ENCODE measurements at regions of chr10 and their contacts with region 1.

Region 1: GRCh38 chr10:117216611-117217195 is 19.4 kb downstream of the KCNK18 start:
- DNase-seq: peak; percentile 67
- ATAC-seq: peak; percentile 86
- H3K4me3 Mint-ChIP-seq: peak overlapping the region; percentile 66
- H3K27ac Mint-ChIP-seq: no peak overlapping the region
- H3K4me1 Mint-ChIP-seq: peaks cover 7% of the 10 kb centered on the region
- H3K27me3 Mint-ChIP-seq: peaks cover 34% of the 10 kb centered on the region

Region 2: DNA sequence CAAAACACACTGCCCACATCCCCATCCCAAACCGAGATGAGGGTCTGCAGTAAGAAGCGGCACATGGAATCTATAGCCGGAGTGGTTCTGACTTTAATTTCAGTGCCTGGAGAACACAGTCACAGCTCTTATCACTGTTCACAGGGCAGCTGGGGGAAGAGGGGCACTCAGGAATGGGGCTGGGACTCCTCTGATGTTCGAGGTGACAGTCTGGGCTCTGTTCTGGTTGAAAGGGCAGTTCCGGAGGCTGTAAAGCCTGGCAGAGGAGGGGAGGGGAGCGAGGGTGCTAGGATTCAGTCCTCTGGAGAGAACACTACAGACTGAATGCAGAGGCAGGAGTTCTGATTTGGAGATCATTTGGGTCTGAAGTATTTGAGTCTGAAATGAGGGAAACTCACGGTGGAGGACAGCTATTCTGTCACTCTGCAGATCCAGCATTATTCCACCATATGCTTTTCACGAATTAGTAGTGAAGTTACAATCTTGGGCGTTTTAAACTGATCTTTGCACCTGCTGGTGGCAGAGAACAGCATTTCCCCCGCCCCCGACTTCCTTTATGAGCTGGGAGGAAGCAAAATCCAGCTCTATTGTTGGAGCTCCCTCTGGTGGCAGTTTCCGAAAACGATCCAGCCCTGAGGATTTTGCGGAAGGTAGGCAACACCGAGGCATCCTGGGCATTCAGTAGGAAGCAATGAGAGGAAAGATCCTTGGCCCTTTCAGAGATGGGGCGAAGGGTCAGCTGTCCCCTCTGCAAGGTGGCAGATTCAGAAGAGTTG is 42.1 kb before region 1 on chr10:
- CTCF ChIA-PET with region 1: interaction called, 20 read pairs
- DNase-seq: peak; percentile 86
- ATAC-seq: peak; percentile 87
- H3K4me3 Mint-ChIP-seq: peak overlapping the region; percentile 76
- H3K27ac Mint-ChIP-seq: peak overlapping the region; percentile 76
- H3K4me1 Mint-ChIP-seq: peaks cover 17% of the 10 kb centered on the region
- H3K27me3 Mint-ChIP-seq: peaks cover 48% of the 10 kb centered on the region

Region 3: DNA sequence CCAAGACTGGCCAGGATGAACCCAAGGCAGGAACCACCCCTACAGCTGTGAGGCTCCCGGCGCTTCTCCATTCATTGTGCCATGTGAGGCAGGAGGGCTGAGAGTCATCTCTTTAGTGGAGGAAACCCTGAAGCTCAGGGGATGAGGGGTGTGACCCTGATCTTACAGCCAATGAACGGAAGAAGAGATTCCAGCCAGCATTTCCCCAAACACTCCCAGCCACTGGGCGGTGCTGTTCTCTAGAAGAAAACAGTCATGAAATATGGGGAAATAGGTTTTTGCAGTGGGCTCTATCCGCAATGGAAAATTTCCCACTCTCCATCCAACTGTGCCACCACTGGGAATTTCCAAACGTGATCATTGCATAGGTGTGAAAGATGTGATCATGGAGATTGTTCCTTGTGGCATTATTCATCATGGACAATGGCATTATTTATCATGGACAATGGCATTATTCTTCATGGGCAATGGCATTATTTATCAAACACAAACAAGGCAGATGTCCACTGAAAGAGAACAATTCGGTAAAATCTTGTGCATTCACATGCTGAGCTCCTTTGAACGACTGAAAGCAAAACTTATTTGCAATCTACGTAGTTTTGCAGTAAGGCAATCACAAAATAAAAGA is 10.2 kb after region 1 on chr10:
- CTCF ChIA-PET with region 1: interaction called, 28 read pairs
- DNase-seq: no peak
- ATAC-seq: no peak
- H3K4me3 Mint-ChIP-seq: no peak overlapping the region
- H3K27ac Mint-ChIP-seq: no peak overlapping the region
- H3K4me1 Mint-ChIP-seq: no peaks in the 10 kb centered on the region
- H3K27me3 Mint-ChIP-seq: peaks cover 25% of the 10 kb centered on the region

Region 4: DNA sequence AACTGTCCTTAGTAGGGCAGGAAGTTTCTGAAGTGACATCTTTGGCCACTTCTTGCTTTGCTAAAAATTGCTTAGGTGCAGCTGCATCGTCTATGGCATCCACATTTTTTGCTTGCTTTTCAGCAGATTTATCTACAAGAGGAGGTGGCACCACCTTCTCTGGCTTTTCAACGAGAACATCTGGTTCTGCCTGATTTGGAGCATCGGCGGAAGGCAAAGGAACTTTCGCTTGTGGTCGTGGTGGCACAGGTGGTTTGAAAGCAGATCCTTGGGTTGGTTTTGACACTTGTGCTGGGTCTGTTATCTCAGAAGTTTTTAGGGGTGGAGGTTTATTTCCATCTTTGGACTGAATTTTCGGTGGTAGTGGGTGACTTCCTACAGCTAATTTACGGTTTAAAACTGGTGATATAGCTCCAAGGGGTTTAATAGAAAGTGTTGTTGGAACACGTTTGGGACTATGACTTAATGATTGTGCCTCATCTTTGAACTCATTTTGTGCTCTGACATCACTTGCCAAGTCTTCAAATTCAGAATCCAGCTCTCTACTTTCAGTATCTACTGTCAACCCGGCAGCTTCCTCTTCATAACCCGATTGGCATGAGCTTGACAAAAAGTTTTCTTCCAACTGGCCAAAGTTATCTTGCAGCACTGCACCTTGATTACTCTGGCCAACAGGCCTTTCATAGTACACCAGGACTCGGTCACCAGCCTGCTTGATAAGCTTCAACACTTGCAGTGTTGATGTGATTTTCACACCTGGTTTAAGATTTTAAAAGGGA is 68.2 kb after region 1 on chr10:
- CTCF ChIA-PET with region 1: interaction called, 10 read pairs
- DNase-seq: no peak
- ATAC-seq: no peak
- H3K4me3 Mint-ChIP-seq: no peak overlapping the region
- H3K27ac Mint-ChIP-seq: no peak overlapping the region
- H3K4me1 Mint-ChIP-seq: peaks cover 3% of the 10 kb centered on the region
- H3K27me3 Mint-ChIP-seq: no peaks in the 10 kb centered on the region

Region 5: GRCh38 chr10:117306674-117307073 is 90.0 kb after region 1 on chr10:
- CTCF ChIA-PET with region 1: interaction called, 10 read pairs
- DNase-seq: no peak
- ATAC-seq: no peak
- H3K4me3 Mint-ChIP-seq: no peak overlapping the region
- H3K27ac Mint-ChIP-seq: no peak overlapping the region
- H3K4me1 Mint-ChIP-seq: peaks cover 6% of the 10 kb centered on the region
- H3K27me3 Mint-ChIP-seq: no peaks in the 10 kb centered on the region

Region 6: GRCh38 chr10:117320050-117320665 is 103.5 kb after region 1 on chr10:
- CTCF ChIA-PET with region 1: interaction called, 126 read pairs
- DNase-seq: no peak
- ATAC-seq: no peak
- H3K4me3 Mint-ChIP-seq: no peak overlapping the region
- H3K27ac Mint-ChIP-seq: no peak overlapping the region
- H3K4me1 Mint-ChIP-seq: no peaks in the 10 kb centered on the region
- H3K27me3 Mint-ChIP-seq: no peaks in the 10 kb centered on the region

Region 7: GRCh38 chr10:117370205-117370604 is 153.5 kb after region 1 on chr10:
- CTCF ChIA-PET with region 1: interaction called, 12 read pairs
- DNase-seq: no peak
- ATAC-seq: no peak
- H3K4me3 Mint-ChIP-seq: no peak overlapping the region
- H3K27ac Mint-ChIP-seq: no peak overlapping the region
- H3K4me1 Mint-ChIP-seq: peaks cover 51% of the 10 kb centered on the region
- H3K27me3 Mint-ChIP-seq: no peaks in the 10 kb centered on the region